CD8-positive, alpha-beta T cell (primary cell): ENCODE measurements at regions of chr18 and their contacts with region 1.

Region 1: GRCh38 chr18:47870605-47871004 is 59.9 kb downstream of the SMAD2 start:
- DNase-seq: peak in 1 of 9 experiments; percentile 16
- ATAC-seq: no peak
- H3K4me3 ChIP-seq: no peak overlapping the region
- H3K4me3 Mint-ChIP-seq: no peak overlapping the region
- H3K27ac ChIP-seq: no peak overlapping the region
- H3K27ac Mint-ChIP-seq: peak overlapping the region; percentile 14
- H3K4me1 ChIP-seq: peaks cover 10% of the 10 kb centered on the region
- H3K4me1 Mint-ChIP-seq: peaks cover 46% of the 10 kb centered on the region
- H3K27me3 ChIP-seq: no peaks in the 10 kb centered on the region
- H3K27me3 Mint-ChIP-seq: no peaks in the 10 kb centered on the region
- CTCF ChIP-seq: no peak

Region 2: DNA sequence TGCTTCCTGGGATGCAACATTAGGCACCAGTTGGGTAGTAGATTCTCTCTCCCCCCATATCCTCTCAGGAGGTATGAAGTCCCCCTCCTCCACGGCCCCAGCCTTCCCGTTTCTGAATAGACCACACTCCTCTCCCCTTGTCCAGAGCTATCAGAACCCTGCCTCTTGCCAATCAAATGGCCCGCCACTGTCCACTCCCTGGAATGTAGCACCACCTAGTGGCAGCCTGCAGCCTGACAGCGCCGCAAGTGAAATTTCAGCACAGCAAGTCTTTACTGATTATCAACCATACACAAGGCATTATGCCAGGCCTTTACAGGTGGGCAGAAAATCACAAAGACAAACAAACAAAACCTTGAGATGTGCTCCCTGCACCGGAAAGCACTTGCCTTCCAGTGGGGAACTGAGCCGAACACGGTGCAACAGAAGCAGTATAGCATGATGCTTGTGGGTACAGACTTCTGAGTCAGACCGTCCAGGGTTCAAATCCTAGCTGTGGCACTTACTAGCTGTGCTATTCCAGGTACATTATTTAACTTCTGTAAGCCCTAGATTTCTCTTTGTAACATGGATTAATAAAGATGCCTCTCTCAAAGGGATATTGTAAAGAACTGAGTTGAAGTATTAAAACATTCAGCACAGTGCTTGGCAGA is 114.1 kb before region 1 on chr18:
- CTCF ChIA-PET with region 1: no interaction called
- POLR2A ChIA-PET with region 1: no interaction called
- intact Hi-C with region 1: no loop called
- DNase-seq: peak in 7 of 9 experiments; percentile 25 to 56 (median 51)
- ATAC-seq: peak; percentile 31
- H3K4me3 ChIP-seq: no peak overlapping the region
- H3K4me3 Mint-ChIP-seq: no peak overlapping the region
- H3K27ac ChIP-seq: no peak overlapping the region
- H3K27ac Mint-ChIP-seq: no peak overlapping the region
- H3K4me1 ChIP-seq: no peaks in the 10 kb centered on the region
- H3K4me1 Mint-ChIP-seq: no peaks in the 10 kb centered on the region
- H3K27me3 ChIP-seq: peaks cover 0 to 11% of the 10 kb centered on the region in 2 experiments
- H3K27me3 Mint-ChIP-seq: peaks cover 46% of the 10 kb centered on the region
- CTCF ChIP-seq: peak; percentile 60

Region 3: DNA sequence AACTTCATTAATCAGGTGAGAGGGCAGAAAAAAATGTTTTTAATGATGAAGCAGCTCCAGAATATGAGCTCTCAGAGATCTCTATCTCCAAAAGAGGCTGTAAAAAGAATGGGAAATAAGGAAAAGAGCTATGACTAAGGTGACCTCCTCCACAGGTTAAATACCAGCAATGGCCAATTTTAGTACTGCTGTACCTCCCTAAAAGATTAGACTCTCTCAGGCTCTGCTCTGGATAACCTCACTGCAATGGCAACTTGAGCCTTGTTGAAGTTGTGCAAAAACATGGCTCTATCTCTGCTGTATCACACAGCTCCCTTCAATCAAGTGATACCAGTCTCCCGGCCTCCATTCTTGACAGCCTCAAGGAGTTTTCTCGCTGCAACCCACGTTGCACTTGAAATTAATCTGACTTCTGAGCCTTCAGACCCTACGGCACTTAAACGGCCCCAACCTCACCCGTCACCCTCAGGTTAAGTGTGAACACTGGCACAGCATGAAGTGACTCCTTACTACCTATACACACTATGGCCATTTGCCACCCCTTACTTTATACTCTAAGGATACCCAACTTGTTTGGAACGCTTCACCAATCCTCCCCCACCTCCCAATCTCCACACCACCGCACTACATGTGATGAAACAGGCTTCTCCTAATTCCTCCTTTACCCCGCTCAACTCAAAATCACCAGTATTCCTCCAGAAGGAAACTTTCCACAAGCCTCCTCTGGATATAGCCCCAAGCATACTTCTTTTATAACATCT is 23.5 kb after region 1 on chr18:
- CTCF ChIA-PET with region 1: no interaction called
- POLR2A ChIA-PET with region 1: no interaction called
- intact Hi-C with region 1: loop called in 1 of 2 experiments (anchors 1 kb)
- DNase-seq: no peak
- ATAC-seq: no peak
- H3K4me3 ChIP-seq: no peak overlapping the region
- H3K4me3 Mint-ChIP-seq: no peak overlapping the region
- H3K27ac ChIP-seq: no peak overlapping the region
- H3K27ac Mint-ChIP-seq: peak overlapping the region; percentile 10
- H3K4me1 ChIP-seq: peaks cover 7% of the 10 kb centered on the region
- H3K4me1 Mint-ChIP-seq: peaks cover 56% of the 10 kb centered on the region
- H3K27me3 ChIP-seq: no peaks in the 10 kb centered on the region
- H3K27me3 Mint-ChIP-seq: no peaks in the 10 kb centered on the region
- CTCF ChIP-seq: no peak

Region 4: DNA sequence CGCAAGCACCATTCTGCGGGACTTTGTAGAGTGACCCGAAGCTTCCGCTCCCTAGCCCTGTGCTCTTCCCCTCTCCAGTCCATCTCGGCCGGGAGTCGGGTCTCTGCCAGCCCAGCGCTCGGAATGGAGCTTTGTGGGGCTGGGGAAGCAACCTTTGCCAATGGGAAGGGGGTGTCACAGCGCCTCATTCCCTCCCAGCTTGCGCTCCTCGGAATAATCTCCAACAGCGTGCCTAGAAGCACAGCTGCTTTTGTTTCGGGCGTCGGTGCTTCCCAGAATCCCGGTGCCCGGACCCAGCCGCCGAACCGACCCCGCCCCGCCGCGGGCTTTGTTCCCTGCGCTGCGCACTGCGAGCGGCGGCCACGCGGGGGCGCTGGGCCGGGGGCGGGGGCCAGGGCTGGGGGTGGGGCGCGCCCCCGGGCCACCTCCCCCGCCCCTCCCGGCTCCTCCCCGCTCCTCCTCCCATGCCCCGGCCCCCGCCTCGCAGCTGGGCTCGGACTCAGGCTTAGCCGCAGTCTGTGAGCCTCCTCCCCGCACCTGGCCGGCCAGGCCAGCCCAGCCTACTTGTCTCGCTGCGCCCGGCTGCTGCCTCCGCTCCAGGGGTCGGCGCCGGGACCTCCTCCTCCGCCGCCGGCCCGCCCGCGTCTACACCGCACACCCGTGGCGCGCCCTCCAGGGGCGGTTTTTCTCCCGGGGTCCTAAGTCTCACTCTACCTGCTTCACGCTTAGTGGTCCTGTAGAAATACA is 137.5 kb after region 1 on chr18:
- CTCF ChIA-PET with region 1: no interaction called
- POLR2A ChIA-PET with region 1: no interaction called
- intact Hi-C with region 1: loop called in 1 of 2 experiments (anchors 10 kb)
- DNase-seq: peak in 8 of 9 experiments; percentile 33 to 70 (median 47)
- ATAC-seq: peak; percentile 88
- H3K4me3 ChIP-seq: peak overlapping the region; percentile 29 to 58
- H3K4me3 Mint-ChIP-seq: peak overlapping the region; percentile 80
- H3K27ac ChIP-seq: no peak overlapping the region
- H3K27ac Mint-ChIP-seq: no peak overlapping the region
- H3K4me1 ChIP-seq: peaks cover 10% of the 10 kb centered on the region
- H3K4me1 Mint-ChIP-seq: peaks cover 7% of the 10 kb centered on the region
- H3K27me3 ChIP-seq: peaks cover 3 to 4% of the 10 kb centered on the region in 2 experiments
- H3K27me3 Mint-ChIP-seq: peaks cover 28% of the 10 kb centered on the region
- CTCF ChIP-seq: peak; percentile 76

Region 5: DNA sequence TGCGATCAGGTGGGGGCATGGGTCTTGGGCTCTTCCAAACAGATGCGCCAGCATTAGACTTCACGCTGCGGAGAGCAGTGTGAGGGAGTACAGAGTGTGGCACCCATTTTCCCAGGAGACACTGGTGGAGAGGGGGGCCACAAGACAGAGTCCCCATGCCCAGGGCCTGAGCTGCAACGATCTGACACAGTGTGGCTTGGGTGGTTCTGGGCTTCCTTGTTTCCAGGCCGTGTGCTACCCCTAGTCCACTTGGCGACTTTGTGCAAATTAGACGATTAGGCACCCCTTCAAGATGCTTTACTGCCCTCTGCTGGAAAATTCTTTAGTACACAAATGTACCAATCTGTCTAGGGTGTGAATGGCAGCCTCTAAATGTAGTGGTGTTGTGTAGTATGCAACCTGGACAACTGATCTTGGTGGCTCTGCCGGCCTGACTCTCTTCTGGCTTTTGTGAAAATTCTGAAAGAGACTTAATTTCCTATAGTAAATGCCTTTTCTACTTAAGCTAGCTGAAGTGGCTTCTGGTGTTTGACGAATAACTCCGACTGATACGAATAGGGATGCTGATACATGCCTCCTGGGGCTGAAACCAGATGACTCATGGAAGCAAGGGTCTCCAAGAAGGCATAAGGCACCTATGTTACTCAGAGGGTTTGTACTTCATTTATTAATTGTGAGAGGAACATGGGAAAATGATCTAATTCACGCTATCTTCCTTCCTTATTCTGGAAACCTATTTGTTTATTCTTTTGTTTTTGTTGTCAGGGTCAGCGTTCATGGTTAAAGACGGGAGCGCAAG is 152.1 kb after region 1 on chr18:
- CTCF ChIA-PET with region 1: no interaction called
- POLR2A ChIA-PET with region 1: no interaction called
- intact Hi-C with region 1: loop called in 1 of 2 experiments (anchors 5 kb)
- DNase-seq: peak in 2 of 9 experiments; percentile 44 to 63
- ATAC-seq: peak; percentile 49
- H3K4me3 ChIP-seq: no peak overlapping the region
- H3K4me3 Mint-ChIP-seq: no peak overlapping the region
- H3K27ac ChIP-seq: no peak overlapping the region
- H3K27ac Mint-ChIP-seq: no peak overlapping the region
- H3K4me1 ChIP-seq: no peaks in the 10 kb centered on the region
- H3K4me1 Mint-ChIP-seq: peaks cover 5% of the 10 kb centered on the region
- H3K27me3 ChIP-seq: peaks cover 0 to 4% of the 10 kb centered on the region in 2 experiments
- H3K27me3 Mint-ChIP-seq: peaks cover 18% of the 10 kb centered on the region
- CTCF ChIP-seq: peak; percentile 37